Endothelial cell of umbilical vein (primary cell): ENCODE measurements at regions of chr10 and their contacts with region 1.

Region 1: GRCh38 chr10:45008524-45009161 is 7.9 kb downstream of the ZNF22 start:
- DNase-seq: peak; percentile 94
- H3K4me3 ChIP-seq: no peak overlapping the region
- H3K27ac ChIP-seq: no peak overlapping the region
- H3K4me1 ChIP-seq: peaks cover 4% of the 10 kb centered on the region
- H3K27me3 ChIP-seq: no peaks in the 10 kb centered on the region
- CTCF ChIP-seq: peak; percentile 70 to 77
- POLR2A ChIP-seq: no peak

Region 2: GRCh38 chr10:44990302-44990655 is 18.4 kb before region 1 on chr10:
- CTCF ChIA-PET with region 1: no interaction called
- POLR2A ChIA-PET with region 1: no interaction called
- dilution Hi-C with region 1: no loop called
- intact Hi-C with region 1: no loop called
- DNase-seq: no peak
- H3K4me3 ChIP-seq: no peak overlapping the region
- H3K27ac ChIP-seq: no peak overlapping the region
- H3K4me1 ChIP-seq: peaks cover 9% of the 10 kb centered on the region
- H3K27me3 ChIP-seq: no peaks in the 10 kb centered on the region
- CTCF ChIP-seq: peak in 1 of 2 donors; percentile 38
- POLR2A ChIP-seq: no peak

Region 3: DNA sequence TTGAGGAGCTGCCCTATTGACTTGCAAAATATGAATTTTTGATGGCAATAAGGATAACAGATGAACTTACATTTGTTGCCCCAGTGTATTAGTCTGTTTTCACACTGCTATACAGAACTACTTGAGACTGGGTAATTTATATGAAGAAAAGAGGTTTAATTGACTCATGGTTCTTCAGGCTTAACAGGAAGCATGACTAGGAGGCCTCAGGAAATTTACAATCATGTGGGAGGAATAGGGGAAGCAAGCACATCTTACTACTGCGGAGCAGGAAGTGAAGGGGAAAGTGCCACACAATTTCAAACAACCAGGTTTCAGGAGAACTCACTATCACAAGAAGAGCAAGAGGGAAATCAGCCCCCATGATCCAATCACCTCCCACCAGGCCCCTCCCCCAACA is 49.9 kb after region 1 on chr10:
- CTCF ChIA-PET with region 1: no interaction called
- POLR2A ChIA-PET with region 1: no interaction called
- dilution Hi-C with region 1: no loop called
- intact Hi-C with region 1: loop called (anchors 2 kb)
- DNase-seq: peak; percentile 72
- H3K4me3 ChIP-seq: no peak overlapping the region
- H3K27ac ChIP-seq: peak overlapping the region; percentile 72
- H3K4me1 ChIP-seq: peaks cover 13% of the 10 kb centered on the region
- H3K27me3 ChIP-seq: no peaks in the 10 kb centered on the region
- CTCF ChIP-seq: no peak
- POLR2A ChIP-seq: no peak

Region 4: DNA sequence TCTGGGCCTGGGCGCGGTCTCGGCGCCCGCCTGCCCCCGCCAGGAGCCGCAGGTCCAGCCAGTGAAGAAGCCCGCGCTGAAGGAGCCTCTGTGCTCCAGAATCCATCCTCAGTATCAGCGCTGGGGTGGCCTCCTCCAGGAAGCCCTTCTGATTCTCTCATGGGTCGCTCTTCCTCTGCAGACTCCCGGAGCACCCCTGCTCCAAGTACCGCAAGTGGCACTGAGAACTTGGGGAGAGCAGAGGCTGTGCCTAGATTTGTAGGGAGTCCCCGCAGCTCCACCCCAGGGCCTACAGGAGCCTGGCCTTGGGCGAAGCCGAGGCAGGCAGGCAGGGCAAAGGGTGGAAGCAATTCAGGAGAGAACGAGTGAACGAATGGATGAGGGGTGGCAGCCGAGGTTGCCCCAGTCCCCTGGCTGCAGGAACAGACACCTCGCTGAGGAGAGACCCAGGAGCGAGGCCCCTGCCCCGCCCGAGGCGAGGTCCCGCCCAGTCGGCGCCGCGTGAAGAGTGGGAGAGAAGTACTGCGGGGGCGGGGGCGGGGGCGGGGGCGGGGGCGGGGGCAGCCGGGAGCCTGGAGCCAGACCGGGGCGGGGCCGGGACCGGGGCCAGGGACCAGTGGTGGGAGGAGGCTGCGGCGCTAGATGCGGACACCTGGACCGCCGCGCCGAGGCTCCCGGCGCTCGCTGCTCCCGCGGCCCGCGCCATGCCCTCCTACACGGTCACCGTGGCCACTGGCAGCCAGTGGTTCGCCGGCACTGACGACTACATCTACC is 365.1 kb after region 1 on chr10 and contains the start of gene ALOX5:
- CTCF ChIA-PET with region 1: no interaction called
- POLR2A ChIA-PET with region 1: no interaction called
- dilution Hi-C with region 1: no loop called
- intact Hi-C with region 1: loop called (anchors 5 kb)
- DNase-seq: no peak
- H3K4me3 ChIP-seq: peak within 1 kb of the TSS in 1 of 3 experiments; percentile 19
- H3K27ac ChIP-seq: no peak within 1 kb of the TSS
- H3K4me1 ChIP-seq: peaks cover 8% of the 10 kb centered on the region
- H3K27me3 ChIP-seq: peaks cover 26 to 44% of the 10 kb centered on the region in 2 experiments
- CTCF ChIP-seq: no peak
- POLR2A ChIP-seq: no peak
- total RNA-seq, gene ALOX5: not detected in 2 replicates

Region 5: DNA sequence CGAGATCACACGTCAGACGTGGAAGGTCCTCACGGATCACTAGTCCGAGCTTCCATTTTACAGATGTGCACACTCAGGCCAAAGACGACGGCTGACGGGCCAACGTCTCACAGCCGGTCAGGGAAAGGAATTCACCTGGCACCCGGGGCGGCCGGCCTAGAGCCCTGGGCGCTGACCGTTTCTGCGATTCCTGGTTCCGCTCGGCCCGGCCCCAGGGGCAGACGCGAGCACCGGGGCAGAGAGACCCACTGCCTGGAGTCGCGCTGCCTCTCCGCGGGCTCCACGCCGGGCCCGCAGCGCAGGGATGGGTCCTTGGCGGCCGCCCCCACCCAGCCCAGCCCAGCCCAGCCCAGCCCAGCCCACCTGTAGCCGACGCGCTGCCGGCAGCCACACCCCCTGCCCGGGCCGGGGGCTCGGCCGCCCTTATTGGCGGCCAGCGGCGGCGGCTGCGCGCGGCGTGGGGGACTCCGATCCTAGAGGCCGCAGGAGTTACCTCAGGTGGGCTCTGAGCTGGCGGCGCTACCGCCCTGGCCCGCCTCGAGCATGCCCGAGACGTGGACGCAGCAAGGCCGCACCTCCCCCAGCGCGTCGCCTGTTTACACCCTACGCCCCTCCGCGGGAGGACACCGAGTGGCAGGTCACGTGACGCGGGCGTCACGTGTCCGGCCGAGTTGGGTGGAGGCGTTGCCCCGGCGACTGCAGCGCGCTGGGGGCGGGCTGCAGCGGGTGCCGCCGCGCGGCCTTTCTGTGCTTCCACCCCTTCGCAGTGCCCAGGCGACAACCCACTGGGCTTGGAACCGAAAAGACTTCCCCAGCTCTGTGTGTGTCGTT is 585.8 kb after region 1 on chr10:
- CTCF ChIA-PET with region 1: no interaction called
- POLR2A ChIA-PET with region 1: no interaction called
- dilution Hi-C with region 1: no loop called
- intact Hi-C with region 1: loop called (anchors 10 kb)
- DNase-seq: peak; percentile 92
- H3K4me3 ChIP-seq: peak overlapping the region; percentile 54 to 99 (median 80)
- H3K27ac ChIP-seq: peak overlapping the region; percentile 16
- H3K4me1 ChIP-seq: peaks cover 11% of the 10 kb centered on the region
- H3K27me3 ChIP-seq: peaks cover under 1 to 5% of the 10 kb centered on the region in 2 experiments
- CTCF ChIP-seq: no peak
- POLR2A ChIP-seq: peak; percentile 67

Region 6: GRCh38 chr10:46022978-46023702 is 1014.5 kb after region 1 on chr10:
- CTCF ChIA-PET with region 1: no interaction called
- POLR2A ChIA-PET with region 1: no interaction called
- dilution Hi-C with region 1: no loop called
- intact Hi-C with region 1: loop called (anchors 10 kb)
- DNase-seq: peak; percentile 95
- H3K4me3 ChIP-seq: peak overlapping the region; percentile 12 to 65 (median 52)
- H3K27ac ChIP-seq: peak overlapping the region; percentile 65
- H3K4me1 ChIP-seq: peaks cover 48% of the 10 kb centered on the region
- H3K27me3 ChIP-seq: no peaks in the 10 kb centered on the region
- CTCF ChIP-seq: peak in 1 of 2 donors; percentile 53
- POLR2A ChIP-seq: no peak